ENCODE measurements at regions of chr17 and their contacts with region 1.

Region 1: GRCh38 chr17:40098846-40099618 is 1.4 kb downstream of the NR1D1 start:
- DNase-seq: peak; percentile 92 to 100 (median 98)
- ATAC-seq: peak; percentile 57 to 70
- H3K4me3 Mint-ChIP-seq: peak overlapping the region; percentile 86 to 98 (median 98)
- H3K27ac Mint-ChIP-seq: peak overlapping the region; percentile 82 to 99 (median 96)
- H3K4me1 Mint-ChIP-seq: peaks cover 55 to 98% (median 90%) of the 10 kb centered on the region in 4 donors
- H3K27me3 Mint-ChIP-seq: no peaks in the 10 kb centered on the region

Region 2: DNA sequence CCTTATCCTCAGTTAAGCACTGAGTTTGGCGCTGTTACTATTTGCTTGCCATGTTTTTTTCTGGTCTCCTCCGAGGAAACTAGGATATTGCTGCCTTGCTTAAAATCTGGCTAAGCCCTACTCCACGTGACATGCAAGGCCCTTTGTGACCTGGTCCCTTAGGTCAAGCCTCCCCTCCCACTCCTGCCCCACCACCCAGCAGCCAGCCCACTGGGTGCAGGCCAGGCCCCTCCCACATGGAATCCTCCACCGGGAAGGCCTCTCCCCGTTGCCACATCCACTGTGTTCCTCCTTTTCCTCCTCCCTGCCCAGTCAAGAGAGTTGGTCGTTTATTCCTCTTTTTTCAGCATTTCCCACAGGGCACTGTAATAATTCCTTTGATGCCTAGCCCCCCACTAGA is 102.2 kb before region 1 on chr17:
- POLR2A ChIA-PET with region 1: no interaction called
- DNase-seq: no peak
- ATAC-seq: no peak
- H3K4me3 Mint-ChIP-seq: no peak overlapping the region
- H3K27ac Mint-ChIP-seq: peak overlapping the region in 1 of 10 donors; percentile 48
- H3K4me1 Mint-ChIP-seq: peaks cover 0 to 13% (median 0%) of the 10 kb centered on the region in 4 donors
- H3K27me3 Mint-ChIP-seq: no peaks in the 10 kb centered on the region

Region 3: DNA sequence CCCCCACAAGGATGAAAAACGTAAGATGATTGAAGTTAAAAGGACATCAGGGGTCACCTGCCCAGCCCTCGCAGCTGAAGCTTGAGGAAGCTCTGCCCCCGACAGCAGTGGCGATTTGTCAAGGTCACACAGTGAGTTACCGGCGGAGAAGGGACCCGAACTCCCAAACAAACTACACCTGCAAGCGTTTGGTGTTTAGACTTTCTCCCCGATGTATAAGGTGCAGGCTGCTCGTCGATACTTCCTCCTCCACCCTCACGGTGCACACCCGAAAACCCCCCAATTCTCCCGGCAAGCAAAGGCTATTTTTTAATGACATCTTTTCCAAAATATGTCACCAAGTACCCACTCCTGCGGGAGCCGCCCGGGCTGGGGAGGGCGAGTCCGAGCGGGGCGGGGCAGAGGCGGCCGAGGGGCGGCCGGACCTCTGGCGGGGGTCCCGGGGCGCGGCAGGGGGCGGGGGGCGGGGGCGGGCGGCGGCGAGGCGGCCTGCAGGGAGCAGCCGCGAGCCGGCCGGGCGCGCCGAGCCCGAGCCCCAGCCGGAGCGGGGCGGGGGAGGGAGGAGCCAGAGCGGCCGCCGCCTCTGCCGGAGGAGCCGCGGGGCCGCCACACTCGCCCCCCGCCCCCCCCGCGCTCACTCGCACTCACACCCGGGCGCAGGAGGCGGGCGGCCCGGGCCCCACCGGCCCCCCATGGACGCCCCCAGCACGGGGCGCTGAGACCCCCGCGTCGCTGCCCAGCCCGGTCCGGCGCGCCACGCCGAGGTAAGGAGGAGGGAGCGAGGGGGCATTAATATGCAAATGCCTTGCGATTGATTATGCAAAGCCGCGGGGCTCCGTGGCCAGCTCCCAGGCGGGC is 36.5 kb before region 1 on chr17 and contains the start of gene THRA:
- POLR2A ChIA-PET with region 1: interaction called, 253 read pairs
- DNase-seq: peak; percentile 60 to 80 (median 72)
- ATAC-seq: peak; percentile 85 to 86
- H3K4me3 Mint-ChIP-seq: peak within 1 kb of the TSS; percentile 88 to 99 (median 92)
- H3K27ac Mint-ChIP-seq: peak within 1 kb of the TSS; percentile 88 to 96 (median 92)
- H3K4me1 Mint-ChIP-seq: peaks cover 36 to 53% (median 48%) of the 10 kb centered on the region in 4 donors
- H3K27me3 Mint-ChIP-seq: no peaks in the 10 kb centered on the region
- polyA plus RNA-seq, gene THRA: 11.3 to 23.3 (median 22.2) TPM

Region 4: GRCh38 chr17:40086150-40087044 is 12.6 kb before region 1 on chr17:
- POLR2A ChIA-PET with region 1: interaction called, 523 read pairs
- DNase-seq: peak; percentile 44 to 82 (median 64)
- ATAC-seq: peak; percentile 70 to 86
- H3K4me3 Mint-ChIP-seq: peak overlapping the region in 1 of 10 donors; percentile 10
- H3K27ac Mint-ChIP-seq: peak overlapping the region in 6 of 10 donors; percentile 13 to 89 (median 46)
- H3K4me1 Mint-ChIP-seq: peaks cover 9 to 34% (median 19%) of the 10 kb centered on the region in 4 donors
- H3K27me3 Mint-ChIP-seq: no peaks in the 10 kb centered on the region

Region 5: GRCh38 chr17:40121181-40122135 is 22.4 kb after region 1 on chr17 and contains the start of gene MSL1:
- POLR2A ChIA-PET with region 1: interaction called, 523 read pairs
- DNase-seq: peak; percentile 76 to 92 (median 85)
- ATAC-seq: peak; percentile 67 to 69
- H3K4me3 Mint-ChIP-seq: peak within 1 kb of the TSS; percentile 71 to 97 (median 84)
- H3K27ac Mint-ChIP-seq: peak within 1 kb of the TSS; percentile 77 to 93 (median 84)
- H3K4me1 Mint-ChIP-seq: peaks cover 25 to 46% (median 44%) of the 10 kb centered on the region in 4 donors
- H3K27me3 Mint-ChIP-seq: no peaks in the 10 kb centered on the region
- polyA plus RNA-seq, gene MSL1: 6.8 to 12.8 (median 9.2) TPM

Region 6: DNA sequence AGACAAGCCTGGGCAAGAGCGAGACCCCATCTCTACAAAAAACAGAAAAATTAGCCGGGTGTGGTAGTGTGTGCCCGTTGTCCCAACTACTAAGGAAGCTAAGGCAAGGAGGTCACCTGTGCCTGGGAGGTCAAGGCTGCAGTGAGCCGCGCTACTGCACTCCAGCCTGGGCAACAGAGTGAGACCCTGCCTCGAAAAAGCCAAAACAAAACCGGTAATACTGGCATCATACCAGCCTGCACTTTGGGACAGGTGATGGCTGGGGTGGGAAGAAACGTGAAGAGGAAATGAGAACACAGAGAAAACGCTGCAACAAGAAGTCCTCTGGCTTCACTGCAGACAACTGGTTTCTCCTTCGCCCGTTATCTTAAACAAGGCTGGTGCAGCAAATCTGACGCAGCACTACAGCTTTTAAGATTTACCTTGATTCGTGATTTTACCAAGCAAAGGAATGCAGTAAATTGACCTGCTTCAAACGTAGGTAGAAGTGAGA is 40.6 kb after region 1 on chr17:
- POLR2A ChIA-PET with region 1: interaction called, 18 read pairs
- DNase-seq: peak in 1 of 10 donors; percentile 11
- ATAC-seq: peak in 1 of 2 donors; percentile 26
- H3K4me3 Mint-ChIP-seq: peak overlapping the region; percentile 86 to 98 (median 95)
- H3K27ac Mint-ChIP-seq: peak overlapping the region; percentile 95 to 100 (median 99)
- H3K4me1 Mint-ChIP-seq: peaks cover 14 to 51% (median 41%) of the 10 kb centered on the region in 4 donors
- H3K27me3 Mint-ChIP-seq: peaks cover 0 to 1% (median 0%) of the 10 kb centered on the region in 5 donors

Region 7: DNA sequence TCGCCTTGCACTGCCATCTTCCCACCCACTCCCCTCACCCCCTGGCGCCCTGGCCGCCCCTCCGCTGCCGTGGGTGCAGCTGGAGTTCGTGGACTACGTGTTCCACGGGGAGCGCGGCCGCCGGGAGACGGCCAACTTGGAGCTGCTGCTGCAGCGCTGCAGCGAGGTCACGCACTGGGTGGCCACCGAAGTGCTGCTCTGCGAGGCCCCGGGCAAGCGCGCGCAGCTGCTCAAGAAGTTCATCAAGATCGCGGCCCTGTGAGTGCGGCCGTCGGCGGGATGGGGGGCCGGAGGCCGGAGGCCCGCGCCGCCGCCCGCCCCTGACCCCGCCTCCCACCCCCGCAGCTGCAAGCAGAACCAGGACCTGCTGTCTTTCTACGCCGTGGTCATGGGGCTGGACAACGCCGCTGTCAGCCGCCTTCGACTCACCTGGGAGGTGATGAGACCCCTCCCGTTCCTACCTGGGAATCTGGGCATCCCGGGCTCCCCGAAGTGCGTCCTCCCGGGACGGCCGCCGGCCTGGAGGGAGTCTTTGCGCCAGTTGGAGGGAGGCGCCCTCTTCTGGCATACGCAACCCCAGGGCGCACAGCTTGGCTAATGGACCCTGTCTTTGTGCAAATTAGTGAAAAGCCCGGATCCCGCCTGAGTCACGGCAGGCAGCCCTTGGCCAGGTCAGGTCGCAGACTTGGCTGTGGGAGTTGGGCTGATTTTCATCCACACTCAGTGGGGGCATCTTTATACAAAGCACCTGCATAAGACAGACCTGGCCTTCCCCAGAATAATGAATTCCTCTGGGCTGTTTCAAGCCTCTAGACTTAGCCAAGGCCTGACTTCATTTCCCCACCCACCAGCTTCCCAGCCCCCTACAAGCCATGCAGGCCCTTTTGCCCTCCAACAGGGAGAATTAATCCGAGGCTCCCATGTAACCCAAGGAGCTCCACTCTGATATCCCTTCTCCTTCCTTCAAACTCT is 92.5 kb after region 1 on chr17:
- POLR2A ChIA-PET with region 1: no interaction called
- DNase-seq: peak; percentile 37 to 76 (median 54)
- ATAC-seq: peak; percentile 78 to 85
- H3K4me3 Mint-ChIP-seq: peak overlapping the region; percentile 89 to 98 (median 94)
- H3K27ac Mint-ChIP-seq: peak overlapping the region in 6 of 10 donors; percentile 17 to 81 (median 66)
- H3K4me1 Mint-ChIP-seq: peaks cover 8 to 14% (median 12%) of the 10 kb centered on the region in 4 donors
- H3K27me3 Mint-ChIP-seq: no peaks in the 10 kb centered on the region